Mammary epithelial cell (primary cell): ENCODE measurements at regions of chr12 and their contacts with region 1.

Region 1: GRCh38 chr12:52390739-52391617 is 5.5 kb upstream of the KRT84 start:
- DNase-seq: no peak
- H3K4me3 ChIP-seq: no peak overlapping the region
- H3K27ac ChIP-seq: peak overlapping the region; percentile 19
- H3K4me1 ChIP-seq: peaks cover 59% of the 10 kb centered on the region
- H3K27me3 ChIP-seq: no peaks in the 10 kb centered on the region
- CTCF ChIP-seq: peak; percentile 89 to 90

Region 2: DNA sequence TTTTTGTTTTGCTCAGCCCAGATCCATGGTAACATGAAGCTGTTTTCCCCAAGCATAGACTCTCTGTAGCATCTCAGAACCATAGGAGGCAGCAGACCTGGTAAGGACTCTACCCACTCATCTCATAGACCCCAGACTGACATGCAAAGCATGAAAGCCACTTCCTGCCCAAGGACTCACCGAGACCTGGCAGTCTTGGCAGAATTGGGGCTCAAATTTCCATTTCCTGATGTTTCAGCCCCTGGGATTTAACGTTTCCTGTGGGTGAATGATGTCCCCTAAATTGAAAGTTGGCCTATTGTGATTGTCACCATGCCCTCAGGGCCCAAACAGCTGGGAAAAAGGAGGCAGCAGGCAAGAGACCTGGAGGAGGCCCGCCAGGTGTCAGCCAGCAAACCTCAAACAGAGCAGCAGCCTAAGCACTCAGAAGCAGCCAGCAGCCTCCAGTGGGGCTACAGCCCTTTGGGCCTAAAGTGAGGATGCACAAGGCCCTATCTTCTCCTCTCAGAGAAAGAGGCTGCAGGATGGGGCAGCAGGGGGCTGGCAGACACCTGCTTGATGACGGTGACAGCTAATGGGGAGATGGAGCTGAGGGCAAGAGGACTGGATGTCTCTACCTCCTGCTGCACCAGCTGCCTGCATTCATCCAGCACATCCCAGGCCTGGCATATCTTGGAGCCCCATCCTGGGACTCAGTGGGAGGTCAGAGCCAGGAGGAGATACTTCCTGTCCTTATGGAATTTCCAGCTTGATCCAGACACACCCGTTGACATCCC is 32.2 kb before region 1 on chr12:
- CTCF ChIA-PET with region 1: no interaction called
- dilution Hi-C with region 1: loop called (anchors 5 kb)
- in situ Hi-C with region 1: no loop called
- intact Hi-C with region 1: no loop called
- DNase-seq: no peak
- H3K4me3 ChIP-seq: no peak overlapping the region
- H3K27ac ChIP-seq: no peak overlapping the region
- H3K4me1 ChIP-seq: peaks cover 3% of the 10 kb centered on the region
- H3K27me3 ChIP-seq: no peaks in the 10 kb centered on the region
- CTCF ChIP-seq: no peak

Region 3: DNA sequence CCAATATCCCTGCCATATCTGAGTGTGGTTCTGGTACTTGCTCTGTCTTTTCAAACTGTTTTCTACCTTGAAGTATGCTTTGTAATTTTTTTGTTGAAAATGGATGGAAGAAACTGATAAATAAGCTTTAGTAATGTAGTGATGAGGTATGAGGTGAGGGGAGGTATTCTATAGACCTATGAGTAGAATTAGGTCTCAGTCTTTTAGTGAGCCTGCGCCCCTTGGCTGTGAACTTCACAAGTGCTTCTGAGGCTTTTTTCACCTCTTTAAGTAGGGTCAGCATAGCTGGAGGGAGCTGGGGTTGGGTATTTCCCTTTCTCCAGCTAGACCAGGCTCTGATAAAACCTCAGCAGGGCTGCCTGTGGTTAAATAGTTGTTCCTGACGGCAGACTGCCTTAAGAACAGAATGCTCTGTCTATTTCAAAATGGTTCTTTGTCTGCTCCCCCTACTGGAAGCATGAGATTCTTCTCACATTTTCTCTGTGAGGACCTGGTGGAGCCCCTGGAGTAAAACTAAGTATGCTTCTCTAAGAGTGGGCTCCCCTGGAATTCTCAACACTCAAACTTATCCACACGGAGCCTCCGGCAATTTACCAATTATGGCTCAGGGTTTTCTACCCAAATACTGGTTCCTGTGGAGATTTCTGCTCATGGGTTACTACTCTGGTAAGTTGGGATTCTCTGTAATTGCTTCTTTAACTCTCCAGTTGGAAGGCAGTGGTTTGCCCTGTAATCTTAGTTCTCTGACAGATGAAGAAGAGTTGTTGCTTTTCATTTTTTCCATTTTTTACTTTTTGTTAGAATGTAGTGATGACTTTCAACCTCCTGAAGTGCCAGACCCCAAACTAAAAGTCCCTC is 116.1 kb after region 1 on chr12:
- CTCF ChIA-PET with region 1: interaction called, 4 read pairs
- dilution Hi-C with region 1: no loop called
- in situ Hi-C with region 1: loop called in 1 of 2 experiments (anchors 10 kb)
- intact Hi-C with region 1: loop called (anchors 1 kb)
- DNase-seq: peak; percentile 82
- H3K4me3 ChIP-seq: no peak overlapping the region
- H3K27ac ChIP-seq: peak overlapping the region; percentile 40
- H3K4me1 ChIP-seq: peaks cover 21% of the 10 kb centered on the region
- H3K27me3 ChIP-seq: no peaks in the 10 kb centered on the region
- CTCF ChIP-seq: peak; percentile 58 to 72

Region 4: GRCh38 chr12:52687497-52688385 is 296.8 kb after region 1 on chr12:
- CTCF ChIA-PET with region 1: no interaction called
- dilution Hi-C with region 1: no loop called
- in situ Hi-C with region 1: no loop called
- intact Hi-C with region 1: loop called (anchors 10 kb)
- DNase-seq: peak; percentile 78
- H3K4me3 ChIP-seq: no peak overlapping the region
- H3K27ac ChIP-seq: no peak overlapping the region
- H3K4me1 ChIP-seq: peaks cover 15% of the 10 kb centered on the region
- H3K27me3 ChIP-seq: peaks cover 16% of the 10 kb centered on the region
- CTCF ChIP-seq: peak in 1 of 2 donors; percentile 11

Region 5: GRCh38 chr12:52980693-52981423 is 589.9 kb after region 1 on chr12:
- CTCF ChIA-PET with region 1: no interaction called
- dilution Hi-C with region 1: loop called (anchors 25 kb)
- in situ Hi-C with region 1: loop called in 1 of 2 experiments (anchors 25 kb)
- intact Hi-C with region 1: no loop called
- DNase-seq: peak; percentile 80
- H3K4me3 ChIP-seq: no peak overlapping the region
- H3K27ac ChIP-seq: no peak overlapping the region
- H3K4me1 ChIP-seq: no peaks in the 10 kb centered on the region
- H3K27me3 ChIP-seq: no peaks in the 10 kb centered on the region
- CTCF ChIP-seq: peak; percentile 99